ENCODE measurements at regions of chr5 and their contacts with region 1.

Region 1: GRCh38 chr5:139543423-139543991 is 17.6 kb upstream of the UBE2D2 start:
- DNase-seq: peak; percentile 70
- H3K4me3 Mint-ChIP-seq: peak overlapping the region; percentile 44
- H3K27ac Mint-ChIP-seq: no peak overlapping the region
- H3K4me1 Mint-ChIP-seq: peaks cover 5% of the 10 kb centered on the region
- H3K27me3 Mint-ChIP-seq: no peaks in the 10 kb centered on the region

Region 2: GRCh38 chr5:138316355-138316754 is 1227.2 kb before region 1 on chr5:
- CTCF ChIA-PET with region 1: no interaction called
- intact Hi-C with region 1: no loop called
- DNase-seq: no peak
- H3K4me3 Mint-ChIP-seq: no peak overlapping the region
- H3K27ac Mint-ChIP-seq: no peak overlapping the region
- H3K4me1 Mint-ChIP-seq: no peaks in the 10 kb centered on the region
- H3K27me3 Mint-ChIP-seq: no peaks in the 10 kb centered on the region

Region 3: GRCh38 chr5:139439013-139439903 is 104.2 kb before region 1 on chr5 and contains the start of gene DNAJC18:
- CTCF ChIA-PET with region 1: no interaction called
- intact Hi-C with region 1: no loop called
- DNase-seq: peak; percentile 94
- H3K4me3 Mint-ChIP-seq: peak within 1 kb of the TSS; percentile 95
- H3K27ac Mint-ChIP-seq: peak within 1 kb of the TSS; percentile 98
- H3K4me1 Mint-ChIP-seq: peaks cover 42% of the 10 kb centered on the region
- H3K27me3 Mint-ChIP-seq: no peaks in the 10 kb centered on the region
- total RNA-seq, gene DNAJC18: 18.1 to 18.8 TPM

Region 4: GRCh38 chr5:139605887-139606286 is 62.4 kb after region 1 on chr5:
- CTCF ChIA-PET with region 1: interaction called, 10 read pairs
- intact Hi-C with region 1: no loop called
- DNase-seq: no peak
- H3K4me3 Mint-ChIP-seq: no peak overlapping the region
- H3K27ac Mint-ChIP-seq: peak overlapping the region; percentile 36
- H3K4me1 Mint-ChIP-seq: peaks cover 29% of the 10 kb centered on the region
- H3K27me3 Mint-ChIP-seq: no peaks in the 10 kb centered on the region

Region 5: GRCh38 chr5:139733698-139734538 is 190.4 kb after region 1 on chr5:
- CTCF ChIA-PET with region 1: no interaction called
- intact Hi-C with region 1: no loop called
- DNase-seq: no peak
- H3K4me3 Mint-ChIP-seq: no peak overlapping the region
- H3K27ac Mint-ChIP-seq: no peak overlapping the region
- H3K4me1 Mint-ChIP-seq: no peaks in the 10 kb centered on the region
- H3K27me3 Mint-ChIP-seq: no peaks in the 10 kb centered on the region

Measured in activated naive CD4-positive, alpha-beta T cell treated with anti-CD3 and anti-CD28 coated beads for 36 hours (primary cell).